Activated CD8-positive, alpha-beta memory T cell treated with anti-CD3 and anti-CD28 coated beads, Interleukin-2, amount 10 ng/mL, durations not matched to agents 7 days and 5 days (primary cell): ENCODE measurements at regions of chr12 and their contacts with region 1.

Region 1: GRCh38 chr12:26884765-26885576 is 52.0 kb upstream of the ITPR2 start:
- DNase-seq: peak; percentile 90
- ATAC-seq: peak; percentile 92
- H3K4me3 Mint-ChIP-seq: peak overlapping the region; percentile 60
- H3K27ac Mint-ChIP-seq: no peak overlapping the region
- H3K4me1 Mint-ChIP-seq: peaks cover 15% of the 10 kb centered on the region
- H3K27me3 Mint-ChIP-seq: peaks cover 21% of the 10 kb centered on the region

Region 2: DNA sequence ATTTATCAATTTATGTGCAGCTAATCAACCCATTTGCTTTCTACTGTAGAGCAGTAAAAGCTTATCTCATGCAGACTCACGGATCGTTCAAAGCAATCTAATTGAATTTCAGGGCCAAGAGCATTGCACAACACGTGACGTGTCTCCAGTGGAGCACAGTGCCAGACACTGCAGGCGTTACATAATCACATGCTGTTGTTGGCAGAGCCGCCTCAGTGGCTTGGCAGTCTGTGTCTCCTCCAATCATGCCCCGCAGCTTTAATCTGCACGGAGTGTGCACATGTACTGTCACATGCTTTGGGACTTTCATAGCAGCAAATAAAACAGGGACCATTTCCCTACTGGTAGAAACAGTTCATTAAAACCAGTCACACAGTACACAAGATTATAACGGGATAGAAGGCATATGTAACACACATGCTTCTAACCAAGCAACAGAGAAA is 361.2 kb before region 1 on chr12:
- CTCF ChIA-PET with region 1: no interaction called
- DNase-seq: no peak
- ATAC-seq: no peak
- H3K4me3 Mint-ChIP-seq: no peak overlapping the region
- H3K27ac Mint-ChIP-seq: no peak overlapping the region
- H3K4me1 Mint-ChIP-seq: peaks cover 12% of the 10 kb centered on the region
- H3K27me3 Mint-ChIP-seq: no peaks in the 10 kb centered on the region

Region 3: GRCh38 chr12:26845057-26845666 is 39.8 kb before region 1 on chr12:
- CTCF ChIA-PET with region 1: interaction called, 15 read pairs
- DNase-seq: no peak
- ATAC-seq: no peak
- H3K4me3 Mint-ChIP-seq: no peak overlapping the region
- H3K27ac Mint-ChIP-seq: no peak overlapping the region
- H3K4me1 Mint-ChIP-seq: peaks cover 3% of the 10 kb centered on the region
- H3K27me3 Mint-ChIP-seq: peaks cover 16% of the 10 kb centered on the region

Region 4: DNA sequence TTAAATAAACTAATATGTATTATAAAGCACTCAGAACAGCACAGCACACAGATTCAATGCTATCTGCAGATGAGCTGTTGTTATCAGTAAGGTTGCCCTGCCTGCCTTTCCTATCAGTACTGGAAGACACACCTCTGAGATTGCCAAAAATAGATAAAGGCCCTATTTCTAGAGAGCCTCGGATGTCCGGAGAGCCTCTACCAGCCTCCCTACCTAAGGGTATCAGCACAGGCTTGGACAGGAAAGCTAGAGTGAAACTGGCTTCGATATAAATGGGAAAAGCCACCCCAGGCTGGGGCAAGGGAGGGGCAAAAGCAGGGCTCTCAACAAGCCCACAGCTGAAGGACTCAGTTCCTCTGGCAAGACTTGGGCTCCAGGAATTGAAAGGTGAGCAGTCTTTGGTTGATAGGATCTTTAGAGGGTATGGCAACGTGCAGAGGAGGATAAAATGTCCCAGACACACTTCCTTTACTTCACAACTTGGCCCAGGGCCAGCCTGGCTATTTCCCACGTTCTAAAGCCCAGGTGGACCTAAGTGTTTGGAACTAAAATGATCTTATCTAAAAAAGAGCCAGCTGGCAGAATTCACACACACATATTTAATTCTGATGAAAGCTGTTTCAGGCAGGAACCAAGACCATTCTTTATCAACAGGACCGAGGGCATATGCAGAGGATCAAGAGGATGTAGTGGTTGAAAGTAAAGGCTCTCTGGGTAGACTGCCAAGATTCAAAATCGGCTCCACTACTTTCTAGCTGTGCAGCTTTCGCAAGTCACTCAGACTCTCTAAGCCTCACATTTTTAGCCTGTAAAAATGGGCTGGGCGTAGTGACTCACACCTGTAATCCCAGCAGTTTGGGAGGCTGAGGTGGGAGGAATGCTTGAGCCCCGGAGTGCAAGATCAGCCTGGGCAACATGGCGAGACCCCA is 14.2 kb before region 1 on chr12:
- CTCF ChIA-PET with region 1: interaction called, 50 read pairs
- DNase-seq: no peak
- ATAC-seq: no peak
- H3K4me3 Mint-ChIP-seq: no peak overlapping the region
- H3K27ac Mint-ChIP-seq: no peak overlapping the region
- H3K4me1 Mint-ChIP-seq: peaks cover 17% of the 10 kb centered on the region
- H3K27me3 Mint-ChIP-seq: peaks cover 13% of the 10 kb centered on the region

Region 5: GRCh38 chr12:27014085-27014858 is 129.3 kb after region 1 on chr12 and contains the start of gene TM7SF3:
- CTCF ChIA-PET with region 1: interaction called, 27 read pairs
- DNase-seq: peak; percentile 97
- ATAC-seq: peak; percentile 89
- H3K4me3 Mint-ChIP-seq: peak within 1 kb of the TSS; percentile 91
- H3K27ac Mint-ChIP-seq: peak within 1 kb of the TSS; percentile 94
- H3K4me1 Mint-ChIP-seq: peaks cover 61% of the 10 kb centered on the region
- H3K27me3 Mint-ChIP-seq: no peaks in the 10 kb centered on the region
- total RNA-seq, gene TM7SF3: 41.4 to 45.1 TPM